B cell (primary cell): ENCODE measurements at regions of chr17 and their contacts with region 1.

Region 1: DNA sequence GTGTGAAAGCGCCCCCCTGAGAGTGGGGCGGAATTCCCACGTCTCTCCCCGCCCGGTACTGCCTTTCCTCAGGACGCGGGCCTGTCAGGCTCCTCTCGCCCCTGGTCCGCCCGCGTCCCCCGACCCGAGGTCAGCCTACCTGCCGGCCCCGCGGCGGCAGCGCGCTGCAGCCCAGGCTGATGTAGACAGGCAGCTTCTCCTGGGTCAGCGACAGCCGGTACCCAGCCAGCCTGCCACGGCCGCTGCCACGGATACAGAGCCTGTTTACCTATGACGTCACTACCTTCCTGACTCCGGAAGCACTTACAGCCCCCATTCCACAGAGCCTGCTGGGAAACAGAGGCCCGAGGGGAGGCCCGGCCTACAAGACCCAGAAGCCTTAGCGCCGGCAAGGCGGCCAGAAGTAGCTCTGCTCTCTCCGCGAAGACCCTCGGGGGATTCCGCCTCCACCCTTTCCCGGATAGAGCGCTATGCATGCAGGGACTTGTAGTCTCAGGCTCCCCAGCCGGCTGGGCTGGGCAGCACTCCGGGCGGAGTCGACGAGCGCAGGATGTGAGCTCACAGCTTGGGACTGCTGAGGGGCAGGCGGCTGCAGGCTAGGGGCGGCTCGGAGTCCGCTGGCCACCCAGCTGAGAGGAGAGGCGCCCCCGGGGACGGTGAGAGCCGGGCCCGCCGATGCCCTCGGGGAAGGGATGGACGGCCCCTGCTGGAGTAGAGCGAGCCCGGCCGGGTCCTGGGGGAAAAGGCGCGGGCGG is at the starts of genes IFT20 and TNFAIP1:
- DNase-seq: peak; percentile 99
- ATAC-seq: peak; percentile 96
- H3K4me3 ChIP-seq: peak within 1 kb of the TSS; percentile 72 to 89 (median 82)
- H3K4me3 Mint-ChIP-seq: peak within 1 kb of the TSS; percentile 93
- H3K27ac ChIP-seq: peak within 1 kb of the TSS; percentile 82 to 95
- H3K27ac Mint-ChIP-seq: peak within 1 kb of the TSS; percentile 91
- H3K4me1 ChIP-seq: peaks cover 19 to 24% of the 10 kb centered on the region in 2 donors
- H3K4me1 Mint-ChIP-seq: peaks cover 35% of the 10 kb centered on the region
- H3K27me3 ChIP-seq: no peaks in the 10 kb centered on the region
- H3K27me3 Mint-ChIP-seq: no peaks in the 10 kb centered on the region
- CTCF ChIP-seq: no peak
- total RNA-seq, gene IFT20: 33.5 and 35.9 TPM in 2 replicates
- total RNA-seq, gene TNFAIP1: 19.0 and 20.4 TPM in 2 replicates

Region 2: GRCh38 chr17:28318759-28319660 is 16.4 kb before region 1 on chr17 and contains the start of gene TMEM97:
- CTCF ChIA-PET with region 1: interaction called, 10 read pairs
- POLR2A ChIA-PET with region 1: interaction called, 6 read pairs
- intact Hi-C with region 1: loop called (anchors 1 kb)
- DNase-seq: peak; percentile 96
- ATAC-seq: peak; percentile 99
- H3K4me3 ChIP-seq: peak within 1 kb of the TSS; percentile 49 to 83 (median 67)
- H3K4me3 Mint-ChIP-seq: peak within 1 kb of the TSS; percentile 88
- H3K27ac ChIP-seq: peak within 1 kb of the TSS; percentile 8 to 37
- H3K27ac Mint-ChIP-seq: peak within 1 kb of the TSS; percentile 88
- H3K4me1 ChIP-seq: peaks cover 13 to 22% of the 10 kb centered on the region in 2 donors
- H3K4me1 Mint-ChIP-seq: peaks cover 22% of the 10 kb centered on the region
- H3K27me3 ChIP-seq: no peaks in the 10 kb centered on the region
- H3K27me3 Mint-ChIP-seq: no peaks in the 10 kb centered on the region
- CTCF ChIP-seq: no peak
- total RNA-seq, gene TMEM97: 5.4 and 6.4 TPM in 2 replicates

Region 3: DNA sequence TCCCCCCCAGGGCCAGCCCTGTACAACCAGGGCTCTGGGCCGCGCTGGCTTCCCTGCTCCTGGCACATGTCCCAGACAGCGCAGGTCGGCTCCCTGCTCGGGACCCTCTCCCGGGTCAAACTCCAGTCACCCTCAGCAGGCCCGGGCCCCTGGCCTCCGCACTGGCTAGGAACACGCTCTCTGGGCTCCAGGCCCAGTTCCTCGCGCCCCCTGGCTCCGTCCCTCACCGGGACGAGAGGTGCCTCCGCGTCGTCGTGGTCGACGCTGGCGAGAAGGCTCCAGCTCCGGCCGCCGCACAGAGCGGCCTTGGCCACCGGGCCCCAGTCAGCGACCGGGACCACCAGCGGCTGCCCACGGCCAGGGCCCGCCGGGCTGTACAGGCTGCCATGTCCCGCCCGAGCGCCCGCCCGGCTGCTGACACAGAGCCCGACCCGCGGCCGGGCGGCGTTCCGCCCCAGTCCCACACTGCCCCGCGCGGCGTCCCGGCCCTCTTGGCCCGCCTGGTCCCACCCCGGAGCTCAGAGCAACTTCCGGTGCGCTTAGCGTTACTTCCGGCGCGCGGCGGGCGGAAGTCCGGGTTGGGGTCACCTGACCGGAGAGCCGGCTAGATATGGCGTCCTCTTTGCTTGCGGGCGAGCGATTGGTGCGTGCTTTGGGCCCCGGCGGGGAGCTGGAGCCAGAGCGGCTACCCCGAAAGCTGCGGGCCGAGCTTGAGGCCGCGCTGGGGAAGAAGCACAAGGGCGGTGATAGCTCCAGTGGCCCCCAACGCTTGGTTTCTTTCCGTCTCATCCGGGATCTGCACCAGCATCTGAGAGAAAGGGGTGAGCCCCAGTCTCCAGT is 21.9 kb after region 1 on chr17 and contains the start of gene POLDIP2:
- CTCF ChIA-PET with region 1: interaction called, 12 read pairs
- POLR2A ChIA-PET with region 1: interaction called, 25 read pairs
- intact Hi-C with region 1: loop called (anchors 1 kb)
- DNase-seq: peak; percentile 96
- ATAC-seq: peak; percentile 98
- H3K4me3 ChIP-seq: peak within 1 kb of the TSS; percentile 74 to 91 (median 81)
- H3K4me3 Mint-ChIP-seq: peak within 1 kb of the TSS; percentile 97
- H3K27ac ChIP-seq: peak within 1 kb of the TSS; percentile 67 to 83
- H3K27ac Mint-ChIP-seq: peak within 1 kb of the TSS; percentile 97
- H3K4me1 ChIP-seq: peaks cover 17 to 22% of the 10 kb centered on the region in 2 donors
- H3K4me1 Mint-ChIP-seq: peaks cover 22% of the 10 kb centered on the region
- H3K27me3 ChIP-seq: no peaks in the 10 kb centered on the region
- H3K27me3 Mint-ChIP-seq: no peaks in the 10 kb centered on the region
- CTCF ChIP-seq: peak; percentile 22
- total RNA-seq, gene POLDIP2: 29.7 and 35.7 TPM in 2 replicates

Region 4: GRCh38 chr17:28416703-28417311 is 81.4 kb after region 1 on chr17:
- CTCF ChIA-PET with region 1: interaction called, 14 read pairs
- POLR2A ChIA-PET with region 1: no interaction called
- intact Hi-C with region 1: no loop called
- DNase-seq: peak; percentile 67
- ATAC-seq: peak; percentile 92
- H3K4me3 ChIP-seq: no peak overlapping the region
- H3K4me3 Mint-ChIP-seq: no peak overlapping the region
- H3K27ac ChIP-seq: no peak overlapping the region
- H3K27ac Mint-ChIP-seq: no peak overlapping the region
- H3K4me1 ChIP-seq: peaks cover 4% of the 10 kb centered on the region in 2 donors
- H3K4me1 Mint-ChIP-seq: peaks cover 5% of the 10 kb centered on the region
- H3K27me3 ChIP-seq: peaks cover 0 to 3% (median 0%) of the 10 kb centered on the region in 4 experiments
- H3K27me3 Mint-ChIP-seq: peaks cover 15% of the 10 kb centered on the region
- CTCF ChIP-seq: peak; percentile 91

Region 5: DNA sequence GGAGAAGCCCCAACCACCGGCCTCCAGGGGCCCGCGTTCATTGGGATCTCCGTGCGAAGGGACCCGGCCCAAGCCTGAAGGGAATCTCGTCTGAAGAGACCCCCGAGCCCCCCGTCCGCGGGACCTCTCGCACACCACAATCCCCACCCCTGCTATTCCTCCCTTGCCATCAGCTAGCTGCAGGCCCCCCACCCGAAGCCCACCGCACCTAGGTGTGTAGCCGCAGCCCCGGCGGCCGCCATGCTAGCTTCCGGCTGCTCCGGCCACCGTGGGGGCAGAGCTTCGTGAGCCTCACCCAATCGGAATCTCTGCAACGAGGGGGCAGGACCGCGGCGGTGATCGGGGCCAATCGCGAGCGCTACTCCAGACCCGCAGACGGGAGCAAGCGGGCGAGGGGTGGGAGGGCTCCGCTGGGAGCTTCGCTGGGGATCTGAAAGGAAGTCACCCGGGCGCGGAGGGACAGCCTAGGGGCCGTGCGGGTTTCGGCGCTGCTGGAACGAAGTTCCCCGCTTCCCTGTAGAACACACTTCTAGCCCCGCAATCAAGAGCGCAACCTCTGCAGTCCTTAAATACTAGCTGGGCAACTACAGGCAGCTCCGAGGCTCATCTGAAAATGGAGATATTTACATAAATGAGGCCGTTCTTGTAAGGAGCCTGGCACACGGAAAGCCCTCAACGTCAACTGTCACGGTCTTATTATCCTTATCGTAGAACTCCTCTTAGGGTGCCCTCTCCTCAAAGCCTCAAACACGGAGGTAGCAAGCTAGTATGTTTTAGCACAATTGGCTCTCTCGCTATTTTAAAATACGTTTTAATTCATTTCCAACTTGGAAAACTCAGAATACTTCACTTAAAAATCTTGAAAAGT is 236.1 kb after region 1 on chr17 and contains the start of gene PIGS:
- CTCF ChIA-PET with region 1: no interaction called
- POLR2A ChIA-PET with region 1: no interaction called
- intact Hi-C with region 1: loop called (anchors 5 kb)
- DNase-seq: peak; percentile 92
- ATAC-seq: peak; percentile 96
- H3K4me3 ChIP-seq: peak within 1 kb of the TSS; percentile 69 to 99 (median 86)
- H3K4me3 Mint-ChIP-seq: peak within 1 kb of the TSS; percentile 95
- H3K27ac ChIP-seq: peak within 1 kb of the TSS; percentile 74 to 80
- H3K27ac Mint-ChIP-seq: peak within 1 kb of the TSS; percentile 93
- H3K4me1 ChIP-seq: peaks cover 45 to 64% of the 10 kb centered on the region in 2 donors
- H3K4me1 Mint-ChIP-seq: peaks cover 60% of the 10 kb centered on the region
- H3K27me3 ChIP-seq: no peaks in the 10 kb centered on the region
- H3K27me3 Mint-ChIP-seq: no peaks in the 10 kb centered on the region
- CTCF ChIP-seq: no peak
- total RNA-seq, gene PIGS: 52.3 and 55.1 TPM in 2 replicates

Region 6: GRCh38 chr17:28737859-28738679 is 402.7 kb after region 1 on chr17:
- CTCF ChIA-PET with region 1: no interaction called
- POLR2A ChIA-PET with region 1: no interaction called
- intact Hi-C with region 1: no loop called
- DNase-seq: peak; percentile 94
- ATAC-seq: peak; percentile 73
- H3K4me3 ChIP-seq: peak overlapping the region in 4 of 5 experiments; percentile 15 to 39 (median 28)
- H3K4me3 Mint-ChIP-seq: peak overlapping the region; percentile 94
- H3K27ac ChIP-seq: peak overlapping the region; percentile 95 to 100
- H3K27ac Mint-ChIP-seq: peak overlapping the region; percentile 100
- H3K4me1 ChIP-seq: peaks cover 83 to 85% of the 10 kb centered on the region in 2 donors
- H3K4me1 Mint-ChIP-seq: peaks cover 80% of the 10 kb centered on the region
- H3K27me3 ChIP-seq: no peaks in the 10 kb centered on the region
- H3K27me3 Mint-ChIP-seq: no peaks in the 10 kb centered on the region
- CTCF ChIP-seq: no peak